ENCODE measurements at regions of chr22 and their contacts with region 1.

Region 1: GRCh38 chr22:26364066-26365015 is 64.7 kb upstream of the ASPHD2 start:
- DNase-seq: peak; percentile 73
- ATAC-seq: peak; percentile 84
- H3K4me3 Mint-ChIP-seq: no peak overlapping the region
- H3K27ac Mint-ChIP-seq: no peak overlapping the region
- H3K4me1 Mint-ChIP-seq: peaks cover 6% of the 10 kb centered on the region
- H3K27me3 Mint-ChIP-seq: peaks cover 8% of the 10 kb centered on the region

Region 2: DNA sequence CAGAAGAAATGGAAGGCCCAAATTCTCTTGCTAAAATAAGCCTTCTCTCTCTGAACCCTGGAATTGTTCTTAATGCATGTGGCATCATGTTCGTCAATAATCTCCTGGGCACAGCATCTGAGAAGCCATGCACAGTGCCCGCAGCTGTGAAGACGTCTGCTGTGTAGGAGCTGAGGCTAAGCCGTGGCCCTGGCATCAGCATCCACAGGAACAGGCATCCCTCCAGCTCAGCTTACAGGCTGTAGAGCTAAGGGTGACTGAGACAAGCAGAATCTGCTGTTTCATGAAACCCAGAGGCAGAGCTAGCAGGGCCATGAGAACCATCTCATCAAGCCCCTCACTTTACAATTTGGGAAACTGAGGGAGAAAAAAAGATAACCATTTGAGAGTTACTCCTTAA is 134.4 kb before region 1 on chr22:
- CTCF ChIA-PET with region 1: no interaction called
- POLR2A ChIA-PET with region 1: no interaction called
- intact Hi-C with region 1: no loop called
- DNase-seq: no peak
- ATAC-seq: no peak
- H3K4me3 Mint-ChIP-seq: no peak overlapping the region
- H3K27ac Mint-ChIP-seq: no peak overlapping the region
- H3K4me1 Mint-ChIP-seq: no peaks in the 10 kb centered on the region
- H3K27me3 Mint-ChIP-seq: peaks cover 4% of the 10 kb centered on the region

Region 3: DNA sequence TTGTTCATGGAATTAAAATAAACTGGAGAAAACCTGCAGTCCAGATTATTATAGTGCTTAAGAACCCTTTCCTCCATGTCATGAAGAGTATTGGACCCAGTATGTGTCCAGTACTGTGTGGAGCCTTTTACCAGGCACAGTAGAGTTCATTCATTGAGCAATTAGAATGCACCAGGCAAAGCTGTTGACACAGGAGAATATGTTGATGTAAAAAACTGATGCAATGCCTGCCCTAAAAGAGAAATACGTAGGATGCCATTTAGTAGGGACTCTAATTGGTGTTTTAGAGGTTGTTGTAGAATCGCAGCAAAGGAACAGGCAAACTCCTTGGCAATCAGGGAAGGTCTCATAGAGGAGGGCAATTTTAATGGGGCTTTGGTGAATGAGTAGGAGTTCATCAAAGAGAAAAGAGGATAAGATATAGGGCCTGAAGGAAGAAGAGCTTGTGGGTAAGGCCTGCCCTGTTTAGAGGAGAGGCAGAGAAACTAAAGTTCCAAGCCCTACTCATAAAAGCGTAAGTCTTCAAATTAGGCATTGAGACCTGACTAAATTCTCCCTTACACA is 68.7 kb before region 1 on chr22:
- CTCF ChIA-PET with region 1: no interaction called
- POLR2A ChIA-PET with region 1: no interaction called
- intact Hi-C with region 1: loop called in 1 of 2 experiments (anchors 2 kb)
- DNase-seq: no peak
- ATAC-seq: no peak
- H3K4me3 Mint-ChIP-seq: no peak overlapping the region
- H3K27ac Mint-ChIP-seq: peak overlapping the region; percentile 82
- H3K4me1 Mint-ChIP-seq: peaks cover 15% of the 10 kb centered on the region
- H3K27me3 Mint-ChIP-seq: no peaks in the 10 kb centered on the region

Region 4: GRCh38 chr22:26377170-26377830 is 13.0 kb after region 1 on chr22:
- CTCF ChIA-PET with region 1: interaction called, 14 read pairs
- POLR2A ChIA-PET with region 1: no interaction called
- intact Hi-C with region 1: no loop called
- DNase-seq: peak; percentile 9
- ATAC-seq: no peak
- H3K4me3 Mint-ChIP-seq: no peak overlapping the region
- H3K27ac Mint-ChIP-seq: no peak overlapping the region
- H3K4me1 Mint-ChIP-seq: peaks cover 7% of the 10 kb centered on the region
- H3K27me3 Mint-ChIP-seq: peaks cover 40% of the 10 kb centered on the region

Region 5: DNA sequence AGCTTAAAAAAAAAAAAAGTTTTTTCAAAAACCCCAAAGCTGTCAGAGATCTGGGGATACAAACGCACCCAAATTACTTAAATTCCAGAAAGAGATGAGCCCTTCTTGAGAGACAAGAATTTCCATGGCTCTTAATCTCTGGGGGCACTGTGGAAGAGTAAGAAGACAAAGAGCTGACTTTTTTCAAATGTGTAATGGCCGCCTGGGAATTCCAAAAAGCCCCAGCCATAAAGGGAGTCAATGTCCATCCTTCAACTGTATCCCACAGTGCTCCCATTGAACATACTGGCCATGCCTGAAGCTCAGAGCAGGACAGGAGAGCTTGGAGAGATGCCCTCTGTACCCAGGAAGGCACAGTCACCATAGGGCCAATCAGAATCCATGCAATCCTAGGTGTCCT is 27.3 kb after region 1 on chr22:
- CTCF ChIA-PET with region 1: interaction called, 10 read pairs
- POLR2A ChIA-PET with region 1: no interaction called
- intact Hi-C with region 1: no loop called
- DNase-seq: no peak
- ATAC-seq: no peak
- H3K4me3 Mint-ChIP-seq: no peak overlapping the region
- H3K27ac Mint-ChIP-seq: no peak overlapping the region
- H3K4me1 Mint-ChIP-seq: no peaks in the 10 kb centered on the region
- H3K27me3 Mint-ChIP-seq: peaks cover 10% of the 10 kb centered on the region

Region 6: GRCh38 chr22:26461188-26461810 is 97.0 kb after region 1 on chr22:
- CTCF ChIA-PET with region 1: interaction called, 36 read pairs
- POLR2A ChIA-PET with region 1: no interaction called
- intact Hi-C with region 1: loop called in 1 of 2 experiments (anchors 1 kb)
- DNase-seq: peak; percentile 61
- ATAC-seq: no peak
- H3K4me3 Mint-ChIP-seq: no peak overlapping the region
- H3K27ac Mint-ChIP-seq: no peak overlapping the region
- H3K4me1 Mint-ChIP-seq: no peaks in the 10 kb centered on the region
- H3K27me3 Mint-ChIP-seq: no peaks in the 10 kb centered on the region

Region 7: DNA sequence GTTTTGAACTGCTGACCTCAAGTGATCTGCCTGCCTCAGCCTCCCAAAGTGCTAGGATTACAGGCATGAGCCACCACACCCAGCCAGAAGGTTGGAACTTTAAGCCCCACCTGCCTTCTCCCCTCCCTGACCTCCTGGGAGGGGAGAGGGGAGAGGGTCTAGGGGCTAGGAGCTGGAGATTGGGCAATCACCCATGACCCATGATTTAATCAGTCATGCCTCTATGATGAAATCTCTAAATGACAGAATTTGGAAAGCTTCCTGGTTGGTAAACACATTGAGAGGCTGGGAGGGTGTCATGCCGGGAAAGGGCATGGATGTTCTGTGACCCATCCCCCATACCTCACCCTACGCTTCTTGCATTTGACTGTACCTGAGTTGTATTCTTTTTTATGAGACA is 165.0 kb after region 1 on chr22:
- CTCF ChIA-PET with region 1: no interaction called
- POLR2A ChIA-PET with region 1: no interaction called
- intact Hi-C with region 1: no loop called
- DNase-seq: no peak
- ATAC-seq: no peak
- H3K4me3 Mint-ChIP-seq: no peak overlapping the region
- H3K27ac Mint-ChIP-seq: no peak overlapping the region
- H3K4me1 Mint-ChIP-seq: peaks cover 7% of the 10 kb centered on the region
- H3K27me3 Mint-ChIP-seq: no peaks in the 10 kb centered on the region

Region 8: DNA sequence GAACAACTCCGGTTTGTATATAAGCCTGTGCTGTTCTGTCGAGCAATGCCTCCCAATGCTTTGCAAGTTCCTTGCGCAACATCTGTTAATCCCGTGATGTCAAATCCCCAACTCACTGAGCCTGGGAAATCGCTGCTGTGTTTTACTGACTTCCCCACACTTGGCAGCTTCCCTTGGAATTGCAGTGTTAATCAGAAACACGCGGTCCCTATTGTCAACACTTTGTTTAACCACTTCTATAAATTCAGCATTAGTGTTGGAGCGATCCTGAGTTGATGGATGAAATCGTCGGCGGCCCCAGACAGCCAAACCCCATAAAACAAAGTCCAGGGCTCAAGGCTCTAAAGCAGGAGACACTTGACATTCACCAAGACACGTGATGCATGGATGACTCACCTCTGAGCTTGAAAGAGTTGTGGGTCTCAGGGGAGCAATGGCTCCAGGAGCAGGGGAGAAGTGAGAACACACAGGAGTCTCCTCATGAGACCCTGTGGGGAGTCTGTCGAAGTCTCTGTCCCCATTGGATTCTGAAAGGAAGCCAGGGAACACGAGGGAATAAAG is 848.4 kb after region 1 on chr22:
- CTCF ChIA-PET with region 1: no interaction called
- POLR2A ChIA-PET with region 1: no interaction called
- intact Hi-C with region 1: no loop called
- DNase-seq: no peak
- ATAC-seq: no peak
- H3K4me3 Mint-ChIP-seq: no peak overlapping the region
- H3K27ac Mint-ChIP-seq: no peak overlapping the region
- H3K4me1 Mint-ChIP-seq: no peaks in the 10 kb centered on the region
- H3K27me3 Mint-ChIP-seq: peaks cover 30% of the 10 kb centered on the region